ENCODE measurements at regions of chr1 and their contacts with region 1.

Region 1: GRCh38 chr1:203340112-203340804 is 10.7 kb downstream of the FMOD start:
- DNase-seq: peak; percentile 73 to 85
- H3K4me3 ChIP-seq: no peak overlapping the region
- H3K27ac ChIP-seq: peak overlapping the region; percentile 36 to 90
- H3K4me1 ChIP-seq: peaks cover 0 to 60% (median 33%) of the 10 kb centered on the region in 4 donors
- H3K27me3 ChIP-seq: no peaks in the 10 kb centered on the region
- CTCF ChIP-seq: peak; percentile 82 to 95

Region 2: GRCh38 chr1:203273206-203273868 is 66.9 kb before region 1 on chr1:
- intact Hi-C with region 1: loop called (anchors 2 kb)
- DNase-seq: peak; percentile 94 to 96
- H3K4me3 ChIP-seq: peak overlapping the region; percentile 24 to 36
- H3K27ac ChIP-seq: peak overlapping the region; percentile 84 to 88
- H3K4me1 ChIP-seq: peaks cover 0 to 58% (median 45%) of the 10 kb centered on the region in 4 donors
- H3K27me3 ChIP-seq: no peaks in the 10 kb centered on the region
- CTCF ChIP-seq: peak; percentile 95 to 99

Region 3: DNA sequence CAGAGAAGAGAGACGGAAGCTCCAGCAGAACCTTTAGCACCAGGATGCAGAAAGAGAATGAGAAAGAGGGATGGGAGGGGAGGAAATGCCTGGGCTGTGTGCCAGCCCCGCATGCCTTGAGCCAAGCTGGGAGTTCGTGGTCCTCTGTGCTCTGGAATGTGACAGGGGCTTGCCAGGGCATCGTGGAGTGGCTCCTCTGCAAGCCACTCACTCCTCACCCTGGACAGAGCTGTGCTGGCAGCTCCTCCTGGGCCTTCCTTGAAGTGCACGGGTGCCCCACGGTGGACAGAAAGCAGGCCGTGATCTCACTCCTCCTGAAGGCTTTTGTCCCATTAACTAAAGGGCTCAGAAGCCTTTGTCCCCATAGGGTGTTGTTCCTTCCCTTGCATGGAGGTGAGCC is 100.5 kb after region 1 on chr1:
- intact Hi-C with region 1: loop called (anchors 2 kb)
- DNase-seq: peak; percentile 91 to 92
- H3K4me3 ChIP-seq: no peak overlapping the region
- H3K27ac ChIP-seq: peak overlapping the region; percentile 81 to 85
- H3K4me1 ChIP-seq: peaks cover 0 to 40% (median 26%) of the 10 kb centered on the region in 4 donors
- H3K27me3 ChIP-seq: no peaks in the 10 kb centered on the region
- CTCF ChIP-seq: peak; percentile 83 to 88

Region 4: GRCh38 chr1:203486618-203487370 is 146.5 kb after region 1 on chr1:
- intact Hi-C with region 1: loop called (anchors 2 kb)
- DNase-seq: no peak
- H3K4me3 ChIP-seq: peak overlapping the region; percentile 11 to 39
- H3K27ac ChIP-seq: peak overlapping the region; percentile 68 to 73
- H3K4me1 ChIP-seq: peaks cover 0 to 66% (median 53%) of the 10 kb centered on the region in 4 donors
- H3K27me3 ChIP-seq: no peaks in the 10 kb centered on the region
- CTCF ChIP-seq: no peak

Region 5: GRCh38 chr1:203702130-203702577 is 361.9 kb after region 1 on chr1:
- intact Hi-C with region 1: loop called (anchors 10 kb)
- DNase-seq: peak in 1 of 2 donors; percentile 56
- H3K4me3 ChIP-seq: no peak overlapping the region
- H3K27ac ChIP-seq: peak overlapping the region in 1 of 2 donors; percentile 29
- H3K4me1 ChIP-seq: peaks cover 0 to 10% (median 4%) of the 10 kb centered on the region in 4 donors
- H3K27me3 ChIP-seq: no peaks in the 10 kb centered on the region
- CTCF ChIP-seq: peak; percentile 77 to 96